ENCODE measurements at regions of chr4 and their contacts with region 1.

Region 1: DNA sequence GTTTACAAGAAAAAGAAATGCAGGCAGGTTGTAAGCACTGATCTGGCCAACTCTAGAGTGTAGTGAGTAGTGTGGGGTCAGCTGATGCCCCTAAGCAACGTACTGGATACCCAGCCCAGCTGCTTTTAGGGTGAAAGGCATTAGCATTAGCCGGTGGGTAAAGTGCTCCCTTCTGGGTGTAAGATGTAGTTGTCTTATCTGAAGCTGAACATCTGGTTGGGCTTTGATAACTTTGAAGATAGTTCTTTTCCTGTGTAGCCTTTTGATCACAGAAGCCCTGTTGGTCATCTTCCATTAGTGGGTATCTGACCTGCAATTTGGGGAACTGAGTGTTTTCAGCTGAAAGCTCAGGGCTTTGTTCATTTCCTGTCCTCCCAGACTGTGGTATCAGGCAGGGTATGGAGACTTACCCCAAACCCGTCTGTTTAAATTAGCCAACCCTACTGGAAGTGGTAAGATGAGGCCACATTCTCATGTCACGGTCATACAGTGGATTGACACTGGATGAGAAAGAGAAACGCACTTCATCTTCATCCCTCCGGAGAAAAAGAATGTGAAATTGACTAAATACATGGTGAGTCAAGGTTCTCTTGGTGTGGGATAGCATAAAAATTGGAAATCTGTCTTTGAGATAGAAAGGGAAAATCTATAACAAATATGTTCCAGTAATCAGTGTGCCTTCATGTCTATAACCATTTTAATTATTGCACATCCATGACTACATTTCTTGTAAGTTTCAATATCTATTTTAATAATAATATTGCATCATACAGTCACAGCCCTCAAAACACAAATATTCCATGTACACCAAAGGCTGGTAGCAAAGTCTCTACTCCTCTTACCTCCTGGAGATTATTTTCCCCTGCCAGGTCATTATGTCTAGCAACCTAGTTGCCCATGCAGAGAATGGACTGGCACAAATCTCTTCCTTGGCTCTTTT is 8.7 kb downstream of the RHOH start:
- DNase-seq: peak in 4 of 5 donors; percentile 44 to 68 (median 49)
- H3K4me3 ChIP-seq: peak overlapping the region; percentile 39 to 67
- H3K4me3 Mint-ChIP-seq: peak overlapping the region; percentile 86 to 100 (median 96)
- H3K27ac ChIP-seq: peak overlapping the region; percentile 99
- H3K27ac Mint-ChIP-seq: peak overlapping the region; percentile 92 to 100 (median 96)
- H3K4me1 ChIP-seq: peaks cover 75% of the 10 kb centered on the region
- H3K4me1 Mint-ChIP-seq: peaks cover 48 to 87% (median 61%) of the 10 kb centered on the region in 4 donors
- H3K27me3 ChIP-seq: no peaks in the 10 kb centered on the region
- H3K27me3 Mint-ChIP-seq: no peaks in the 10 kb centered on the region

Region 2: GRCh38 chr4:40221744-40222143 is 16.2 kb after region 1 on chr4:
- CTCF ChIA-PET with region 1: interaction called, 93 read pairs
- POLR2A ChIA-PET with region 1: interaction called, 1,182 read pairs
- intact Hi-C with region 1: no loop called
- DNase-seq: no peak
- H3K4me3 ChIP-seq: peak overlapping the region in 1 of 2 donors; percentile 29
- H3K4me3 Mint-ChIP-seq: peak overlapping the region in 7 of 8 donors; percentile 39 to 82 (median 69)
- H3K27ac ChIP-seq: peak overlapping the region; percentile 41
- H3K27ac Mint-ChIP-seq: peak overlapping the region; percentile 73 to 100 (median 88)
- H3K4me1 ChIP-seq: peaks cover 100% of the 10 kb centered on the region
- H3K4me1 Mint-ChIP-seq: peaks cover 76 to 99% (median 87%) of the 10 kb centered on the region in 4 donors
- H3K27me3 ChIP-seq: no peaks in the 10 kb centered on the region
- H3K27me3 Mint-ChIP-seq: no peaks in the 10 kb centered on the region

Region 3: DNA sequence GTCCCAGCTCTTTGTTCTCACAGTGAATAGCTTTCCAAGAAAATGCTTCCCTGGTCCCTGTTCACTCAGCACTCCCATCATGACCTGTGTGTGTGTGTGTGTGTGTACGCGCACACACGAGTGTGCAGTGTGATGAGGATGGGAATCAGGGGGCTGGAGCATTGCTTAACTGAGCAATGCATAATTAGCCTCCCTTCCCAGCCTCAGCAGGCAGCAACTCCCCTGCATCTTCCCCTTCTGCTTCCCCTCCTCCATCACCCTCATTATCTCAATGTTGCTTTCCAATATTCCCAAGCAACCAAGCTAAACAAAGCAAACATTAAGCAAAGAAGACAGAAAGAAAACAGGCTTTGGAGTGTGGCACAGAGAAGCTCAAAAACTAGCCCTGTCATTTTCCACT is 287.2 kb after region 1 on chr4:
- CTCF ChIA-PET with region 1: no interaction called
- POLR2A ChIA-PET with region 1: no interaction called
- intact Hi-C with region 1: no loop called
- DNase-seq: no peak
- H3K4me3 ChIP-seq: no peak overlapping the region
- H3K4me3 Mint-ChIP-seq: peak overlapping the region in 1 of 8 donors; percentile 17
- H3K27ac ChIP-seq: no peak overlapping the region
- H3K27ac Mint-ChIP-seq: no peak overlapping the region
- H3K4me1 ChIP-seq: no peaks in the 10 kb centered on the region
- H3K4me1 Mint-ChIP-seq: no peaks in the 10 kb centered on the region
- H3K27me3 ChIP-seq: no peaks in the 10 kb centered on the region
- H3K27me3 Mint-ChIP-seq: peaks cover 1 to 3% of the 10 kb centered on the region in 2 donors

Region 4: DNA sequence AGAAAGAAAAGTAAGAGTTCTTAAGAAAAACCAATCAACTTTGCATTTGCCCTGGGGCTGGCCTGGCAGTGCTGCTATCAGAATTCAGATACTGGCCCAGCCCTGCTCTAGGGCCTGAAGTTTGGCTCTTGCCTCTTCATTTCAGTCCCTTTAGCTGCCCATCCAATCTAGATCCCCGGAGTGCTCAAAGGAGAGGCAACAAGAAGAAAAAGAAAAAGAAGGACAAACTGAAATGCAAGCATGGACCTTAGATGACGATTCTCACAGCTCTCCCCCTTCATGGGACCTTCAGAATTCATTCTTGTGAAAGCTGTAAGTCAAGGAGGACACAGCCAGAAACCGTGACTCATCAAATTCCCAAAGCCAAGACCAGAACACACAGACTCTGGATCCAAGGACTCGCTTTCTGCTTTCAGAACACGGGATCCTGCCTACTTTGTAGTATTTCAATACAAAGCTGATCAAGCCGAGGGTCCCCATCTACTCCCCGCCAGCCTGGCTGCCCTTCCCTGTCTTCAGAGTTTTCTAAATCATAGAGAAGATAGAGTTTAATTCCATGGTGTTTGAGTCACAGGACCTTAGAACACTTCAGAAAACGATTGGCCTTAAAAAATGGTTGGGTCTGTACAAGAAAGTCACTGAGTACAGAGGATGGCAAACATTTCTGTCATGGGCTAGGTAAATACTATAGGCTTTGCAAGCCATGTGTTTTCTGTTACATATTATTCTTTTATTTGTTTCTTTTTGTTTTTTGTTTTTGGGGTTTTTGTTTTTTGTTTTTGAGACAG is 320.5 kb after region 1 on chr4:
- CTCF ChIA-PET with region 1: no interaction called
- POLR2A ChIA-PET with region 1: no interaction called
- intact Hi-C with region 1: no loop called
- DNase-seq: no peak
- H3K4me3 ChIP-seq: no peak overlapping the region
- H3K4me3 Mint-ChIP-seq: no peak overlapping the region
- H3K27ac ChIP-seq: no peak overlapping the region
- H3K27ac Mint-ChIP-seq: peak overlapping the region in 1 of 7 donors; percentile 21
- H3K4me1 ChIP-seq: no peaks in the 10 kb centered on the region
- H3K4me1 Mint-ChIP-seq: no peaks in the 10 kb centered on the region
- H3K27me3 ChIP-seq: no peaks in the 10 kb centered on the region
- H3K27me3 Mint-ChIP-seq: no peaks in the 10 kb centered on the region

Measured in CD4-positive, alpha-beta memory T cell (primary cell).